ENCODE measurements at regions of chr11 and their contacts with region 1.

Region 1: GRCh38 chr11:10455637-10456487 is 798 bp downstream of the AMPD3 start:
- DNase-seq: peak; percentile 43
- ATAC-seq: peak; percentile 71
- H3K4me3 ChIP-seq: peak overlapping the region; percentile 66
- H3K27ac ChIP-seq: peak overlapping the region; percentile 59
- H3K4me1 ChIP-seq: peaks cover 51% of the 10 kb centered on the region
- H3K27me3 ChIP-seq: peaks cover 0 to 2% of the 10 kb centered on the region in 2 experiments; a peak in 3 of 4 replicates
- CTCF ChIP-seq: no peak
- EP300 ChIP-seq: peak in 1 of 2 experiments; percentile 30; a peak in 1 of 4 replicates
- POLR2A ChIP-seq: peak; percentile 59
- RAD21 ChIP-seq: no peak

Region 2: GRCh38 chr11:10272132-10272531 is 183.7 kb before region 1 on chr11:
- CTCF ChIA-PET with region 1: no interaction called
- POLR2A ChIA-PET with region 1: no interaction called
- RAD21 ChIA-PET with region 1: no interaction called
- SMC1A ChIA-PET with region 1: no interaction called
- in situ Hi-C with region 1: no loop called
- intact Hi-C with region 1: no loop called
- DNase-seq: no peak
- ATAC-seq: no peak
- H3K4me3 ChIP-seq: no peak overlapping the region
- H3K27ac ChIP-seq: no peak overlapping the region
- H3K4me1 ChIP-seq: no peaks in the 10 kb centered on the region
- H3K27me3 ChIP-seq: no peaks in the 10 kb centered on the region; a peak in 1 of 4 replicates
- CTCF ChIP-seq: no peak
- EP300 ChIP-seq: no peak
- POLR2A ChIP-seq: no peak
- RAD21 ChIP-seq: no peak

Region 3: GRCh38 chr11:10405855-10406592 is 49.8 kb before region 1 on chr11:
- CTCF ChIA-PET with region 1: interaction called, 10 read pairs
- POLR2A ChIA-PET with region 1: no interaction called
- RAD21 ChIA-PET with region 1: interaction called, 6 read pairs
- SMC1A ChIA-PET with region 1: interaction called, 4 read pairs
- in situ Hi-C with region 1: no loop called
- intact Hi-C with region 1: no loop called
- DNase-seq: peak; percentile 4
- ATAC-seq: peak; percentile 96
- H3K4me3 ChIP-seq: no peak overlapping the region
- H3K27ac ChIP-seq: no peak overlapping the region
- H3K4me1 ChIP-seq: no peaks in the 10 kb centered on the region
- H3K27me3 ChIP-seq: no peaks in the 10 kb centered on the region; a peak in 1 of 4 replicates
- CTCF ChIP-seq: peak; percentile 65 to 77 (median 68)
- EP300 ChIP-seq: no peak
- POLR2A ChIP-seq: no peak
- RAD21 ChIP-seq: peak; percentile 85

Region 4: DNA sequence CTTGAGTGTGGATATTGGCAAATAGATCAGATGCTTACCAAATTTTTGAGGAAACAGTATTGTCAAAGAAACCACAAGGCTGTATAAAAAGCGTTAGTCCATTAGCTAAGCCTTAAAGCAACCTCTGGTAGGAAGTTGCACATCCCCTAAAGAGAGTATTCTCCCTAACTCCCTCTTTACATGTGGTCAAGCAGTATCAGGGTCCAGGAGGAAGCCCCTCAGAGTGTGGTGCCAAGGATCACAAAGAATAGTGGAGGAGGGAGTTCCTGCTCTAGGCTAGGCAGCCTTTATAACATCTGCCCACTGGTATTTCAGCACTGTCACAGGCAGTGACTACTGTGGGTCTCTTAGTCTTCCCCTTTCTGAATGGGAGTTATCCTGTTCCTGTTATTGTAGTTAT is 19.6 kb before region 1 on chr11:
- CTCF ChIA-PET with region 1: interaction called, 69 read pairs
- POLR2A ChIA-PET with region 1: interaction called, 19 read pairs
- RAD21 ChIA-PET with region 1: interaction called, 51 read pairs
- SMC1A ChIA-PET with region 1: interaction called, 44 read pairs
- in situ Hi-C with region 1: no loop called
- intact Hi-C with region 1: no loop called
- DNase-seq: no peak
- ATAC-seq: peak; percentile 37; the same call in 2 of the 3 replicates
- H3K4me3 ChIP-seq: no peak overlapping the region
- H3K27ac ChIP-seq: no peak overlapping the region
- H3K4me1 ChIP-seq: no peaks in the 10 kb centered on the region
- H3K27me3 ChIP-seq: no peaks in the 10 kb centered on the region; a peak in 1 of 4 replicates
- CTCF ChIP-seq: no peak
- EP300 ChIP-seq: no peak
- POLR2A ChIP-seq: no peak
- RAD21 ChIP-seq: no peak

Region 5: GRCh38 chr11:10490398-10491241 is 34.8 kb after region 1 on chr11:
- CTCF ChIA-PET with region 1: interaction called, 9 read pairs
- POLR2A ChIA-PET with region 1: interaction called, 12 read pairs
- RAD21 ChIA-PET with region 1: interaction called, 63 read pairs
- SMC1A ChIA-PET with region 1: interaction called, 42 read pairs
- in situ Hi-C with region 1: no loop called
- intact Hi-C with region 1: loop called (anchors 2 kb)
- DNase-seq: no peak
- ATAC-seq: no peak
- H3K4me3 ChIP-seq: no peak overlapping the region
- H3K27ac ChIP-seq: no peak overlapping the region
- H3K4me1 ChIP-seq: peaks cover 14% of the 10 kb centered on the region
- H3K27me3 ChIP-seq: no peaks in the 10 kb centered on the region
- CTCF ChIP-seq: no peak
- EP300 ChIP-seq: no peak
- POLR2A ChIP-seq: no peak
- RAD21 ChIP-seq: no peak

Region 6: GRCh38 chr11:10540923-10541560 is 85.2 kb after region 1 on chr11 and contains the start of gene RNF141:
- CTCF ChIA-PET with region 1: interaction called, 36 read pairs
- POLR2A ChIA-PET with region 1: interaction called, 5 read pairs
- RAD21 ChIA-PET with region 1: interaction called, 18 read pairs
- SMC1A ChIA-PET with region 1: interaction called, 18 read pairs
- in situ Hi-C with region 1: no loop called
- intact Hi-C with region 1: loop called (anchors 5 kb)
- DNase-seq: peak; percentile 60
- ATAC-seq: peak; percentile 99
- H3K4me3 ChIP-seq: peak within 1 kb of the TSS; percentile 64
- H3K27ac ChIP-seq: peak within 1 kb of the TSS; percentile 22; the same call in 1 of the 2 replicates
- H3K4me1 ChIP-seq: peaks cover 5% of the 10 kb centered on the region
- H3K27me3 ChIP-seq: peaks cover 0 to 5% of the 10 kb centered on the region in 2 experiments; a peak in 1 of 4 replicates
- CTCF ChIP-seq: peak; percentile 80 to 93 (median 91); a peak in 5 of 6 replicates
- EP300 ChIP-seq: no peak
- POLR2A ChIP-seq: peak; percentile 98
- RAD21 ChIP-seq: peak; percentile 47
- polyA plus RNA-seq, gene RNF141: 21.2 to 36.8 TPM